CD8-positive, alpha-beta memory T cell (primary cell): ENCODE measurements at regions of chr20 and their contacts with region 1.

Region 1: GRCh38 chr20:47610247-47610944 is 108.7 kb downstream of the NCOA3 start:
- DNase-seq: peak in 4 of 5 donors; percentile 18 to 83 (median 24)
- H3K4me3 ChIP-seq: no peak overlapping the region
- H3K4me3 Mint-ChIP-seq: peak overlapping the region in 6 of 7 donors; percentile 36 to 74 (median 49)
- H3K27ac ChIP-seq: peak overlapping the region; percentile 34
- H3K27ac Mint-ChIP-seq: peak overlapping the region; percentile 59 to 92 (median 90)
- H3K4me1 ChIP-seq: peaks cover 41% of the 10 kb centered on the region
- H3K4me1 Mint-ChIP-seq: peaks cover 59 to 87% (median 74%) of the 10 kb centered on the region in 3 donors
- H3K27me3 ChIP-seq: no peaks in the 10 kb centered on the region
- H3K27me3 Mint-ChIP-seq: no peaks in the 10 kb centered on the region

Region 2: DNA sequence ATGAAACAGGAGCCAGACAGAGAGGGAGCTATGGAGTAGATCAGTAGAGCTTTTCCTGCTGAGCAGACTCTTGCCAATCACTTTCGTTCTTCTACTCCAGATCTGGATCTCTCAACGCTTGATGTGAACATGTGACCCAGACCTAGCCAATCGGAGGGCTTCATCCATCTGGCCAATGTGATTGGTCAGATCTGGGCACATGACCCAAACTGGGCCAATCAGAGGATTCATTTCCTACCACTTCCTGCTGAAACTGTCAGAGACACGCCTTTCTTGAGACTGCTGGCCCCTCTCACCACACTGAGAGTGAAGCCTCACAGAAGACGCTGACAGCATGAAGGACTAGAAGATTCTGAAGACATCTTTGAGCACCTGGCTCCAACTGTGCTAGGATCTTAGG is 209.7 kb before region 1 on chr20:
- CTCF ChIA-PET with region 1: no interaction called
- POLR2A ChIA-PET with region 1: no interaction called
- DNase-seq: no peak
- H3K4me3 ChIP-seq: no peak overlapping the region
- H3K4me3 Mint-ChIP-seq: no peak overlapping the region
- H3K27ac ChIP-seq: no peak overlapping the region
- H3K27ac Mint-ChIP-seq: no peak overlapping the region
- H3K4me1 ChIP-seq: no peaks in the 10 kb centered on the region
- H3K4me1 Mint-ChIP-seq: peaks cover 3 to 5% (median 5%) of the 10 kb centered on the region in 3 donors
- H3K27me3 ChIP-seq: no peaks in the 10 kb centered on the region
- H3K27me3 Mint-ChIP-seq: no peaks in the 10 kb centered on the region

Region 3: DNA sequence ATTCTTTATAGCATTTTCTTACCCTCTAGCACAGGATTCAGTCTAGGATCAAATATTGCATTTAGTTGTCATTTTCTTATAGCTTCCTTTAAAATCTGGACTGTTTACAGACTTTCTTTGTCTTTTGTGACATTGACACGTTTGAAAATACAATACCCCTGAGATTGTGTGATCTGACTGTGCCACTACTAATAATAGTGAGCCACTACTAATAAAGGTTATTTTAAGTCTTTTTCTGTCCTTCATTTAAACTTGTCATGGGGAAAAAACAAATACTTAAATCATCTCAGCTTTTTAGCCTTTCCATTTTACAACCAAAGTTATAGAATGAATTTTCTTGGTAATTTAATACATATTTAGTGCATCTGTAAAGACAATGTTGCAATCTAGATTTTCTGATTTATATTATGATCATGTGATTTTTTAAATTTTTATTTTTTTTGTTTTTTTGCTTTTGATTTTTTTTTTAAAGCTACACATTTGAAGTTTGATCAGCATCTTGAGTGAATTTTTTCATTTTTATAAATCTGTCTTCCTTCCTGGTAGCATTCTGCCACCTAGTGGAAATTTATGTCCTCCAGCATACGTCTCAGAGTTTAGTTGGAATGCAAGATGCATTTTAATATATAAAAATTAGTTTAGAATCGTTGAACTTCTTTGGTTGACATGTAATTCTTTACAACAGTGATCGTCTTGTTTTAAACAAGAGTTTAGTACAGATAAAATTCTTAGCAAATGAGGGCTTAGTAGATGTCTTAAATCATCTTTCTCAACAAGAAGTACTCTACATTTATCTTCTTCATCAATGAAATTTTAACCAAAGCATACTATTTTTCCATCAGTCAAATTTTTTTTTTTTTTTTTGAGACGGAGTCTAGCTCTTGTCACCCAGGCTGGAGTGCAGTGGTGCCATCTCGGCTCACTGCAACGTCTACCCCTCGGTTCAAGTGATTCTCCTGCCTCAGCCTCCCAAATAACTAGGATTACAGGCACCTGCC is 10.7 kb after region 1 on chr20:
- CTCF ChIA-PET with region 1: interaction called, 12 read pairs
- POLR2A ChIA-PET with region 1: interaction called, 4 read pairs
- DNase-seq: peak in 2 of 5 donors; percentile 25 to 35
- H3K4me3 ChIP-seq: no peak overlapping the region
- H3K4me3 Mint-ChIP-seq: no peak overlapping the region
- H3K27ac ChIP-seq: no peak overlapping the region
- H3K27ac Mint-ChIP-seq: peak overlapping the region in 3 of 8 donors; percentile 26 to 36 (median 31)
- H3K4me1 ChIP-seq: no peaks in the 10 kb centered on the region
- H3K4me1 Mint-ChIP-seq: peaks cover 17 to 31% (median 22%) of the 10 kb centered on the region in 3 donors
- H3K27me3 ChIP-seq: no peaks in the 10 kb centered on the region
- H3K27me3 Mint-ChIP-seq: peaks cover 0 to 2% of the 10 kb centered on the region in 2 donors

Region 4: GRCh38 chr20:47642624-47643023 is 32.2 kb after region 1 on chr20:
- CTCF ChIA-PET with region 1: no interaction called
- POLR2A ChIA-PET with region 1: no interaction called
- DNase-seq: no peak
- H3K4me3 ChIP-seq: no peak overlapping the region
- H3K4me3 Mint-ChIP-seq: no peak overlapping the region
- H3K27ac ChIP-seq: no peak overlapping the region
- H3K27ac Mint-ChIP-seq: no peak overlapping the region
- H3K4me1 ChIP-seq: no peaks in the 10 kb centered on the region
- H3K4me1 Mint-ChIP-seq: peaks cover 0 to 8% (median 6%) of the 10 kb centered on the region in 3 donors
- H3K27me3 ChIP-seq: no peaks in the 10 kb centered on the region
- H3K27me3 Mint-ChIP-seq: no peaks in the 10 kb centered on the region

Region 5: DNA sequence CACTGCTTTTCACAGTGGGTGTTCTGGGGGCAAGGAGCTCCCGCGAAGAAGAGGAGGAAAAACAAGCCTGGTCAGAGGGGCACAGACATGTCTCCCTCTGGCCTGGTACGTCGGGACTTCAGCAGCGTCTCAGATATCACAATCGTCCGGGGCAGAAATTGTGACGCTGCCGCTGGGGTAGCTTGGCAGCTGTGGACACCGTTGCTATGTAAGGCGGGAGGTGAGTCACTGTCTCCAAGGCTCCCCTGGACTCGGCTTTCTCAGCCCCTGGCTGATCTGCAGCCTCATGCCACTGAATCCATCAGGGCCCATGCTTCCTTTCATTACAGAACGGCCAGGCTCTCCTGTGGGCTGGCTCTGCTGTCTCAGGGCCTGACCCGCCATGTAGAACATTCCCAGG is 76.1 kb after region 1 on chr20:
- CTCF ChIA-PET with region 1: no interaction called
- POLR2A ChIA-PET with region 1: no interaction called
- DNase-seq: no peak
- H3K4me3 ChIP-seq: no peak overlapping the region
- H3K4me3 Mint-ChIP-seq: no peak overlapping the region
- H3K27ac ChIP-seq: no peak overlapping the region
- H3K27ac Mint-ChIP-seq: no peak overlapping the region
- H3K4me1 ChIP-seq: no peaks in the 10 kb centered on the region
- H3K4me1 Mint-ChIP-seq: no peaks in the 10 kb centered on the region
- H3K27me3 ChIP-seq: no peaks in the 10 kb centered on the region
- H3K27me3 Mint-ChIP-seq: peaks cover 6 to 20% of the 10 kb centered on the region in 2 donors